Heart left ventricle (tissue), 16 donors: ENCODE measurements at regions of chr17 and their contacts with region 1.

Region 1: DNA sequence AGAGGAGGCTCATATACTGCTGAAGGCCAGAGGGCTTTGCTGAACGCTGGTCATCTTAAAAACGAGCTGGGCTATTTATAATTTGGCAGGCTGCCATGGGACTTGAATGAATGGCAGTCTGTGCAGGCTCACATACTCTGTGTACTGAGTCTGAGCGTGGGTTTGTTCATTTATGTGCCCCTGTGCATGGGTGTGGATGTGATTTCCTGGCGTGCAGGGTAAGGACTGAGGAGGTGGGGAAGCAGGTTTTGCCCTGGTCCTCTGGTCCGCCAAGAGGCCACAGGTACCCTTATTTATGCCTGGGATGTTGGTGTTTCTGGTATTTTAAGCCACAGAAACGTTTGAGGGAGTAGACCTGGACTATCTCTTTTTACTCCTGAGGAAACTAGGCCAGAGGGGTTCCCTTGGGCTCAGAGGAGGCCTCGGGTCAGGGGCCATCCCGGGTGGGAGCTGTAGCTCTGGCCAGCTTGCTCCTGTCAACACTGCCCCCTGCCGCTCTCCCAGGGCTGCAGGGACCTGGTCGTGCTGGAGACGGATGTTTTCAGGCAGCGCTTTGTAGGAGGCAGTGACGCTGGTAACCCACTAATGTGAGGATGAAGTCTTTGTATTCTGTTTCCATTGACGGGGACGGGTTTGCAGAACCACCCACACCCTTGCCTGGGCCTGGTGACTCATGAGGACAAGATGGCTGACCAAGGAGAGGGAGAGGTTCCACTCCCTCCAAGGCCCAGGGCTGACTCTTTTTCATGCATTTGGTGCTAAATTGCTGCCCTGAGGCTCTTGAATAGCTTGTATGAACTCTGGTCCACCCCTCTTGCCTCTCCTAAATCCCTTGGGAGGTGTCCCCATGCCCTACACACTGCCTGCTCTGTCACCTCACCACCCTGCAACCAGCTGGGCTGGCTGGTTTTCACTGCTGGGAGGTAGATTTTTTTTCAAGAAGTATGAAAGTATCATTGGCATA is 184.5 kb downstream of the MSI2 start:
- DNase-seq: peak; percentile 76 to 88 (median 78)
- ATAC-seq: peak; percentile 74 to 86 (median 84)
- H3K4me3 ChIP-seq: peak overlapping the region in 1 of 12 donors; percentile 7
- H3K27ac ChIP-seq: peak overlapping the region; percentile 11 to 87 (median 69)
- H3K4me1 ChIP-seq: peaks cover 4 to 91% (median 57%) of the 10 kb centered on the region in 12 donors
- H3K27me3 ChIP-seq: no peaks in the 10 kb centered on the region
- CTCF ChIP-seq: peak; percentile 16 to 80 (median 56)
- POLR2A ChIP-seq: no peak

Region 2: GRCh38 chr17:57366558-57367351 is 74.0 kb before region 1 on chr17:
- intact Hi-C with region 1: loop called in 1 of 10 experiments (anchors 5 kb)
- DNase-seq: peak in 4 of 5 donors; percentile 17 to 70 (median 54)
- ATAC-seq: peak; percentile 70 to 83 (median 76)
- H3K4me3 ChIP-seq: peak overlapping the region in 2 of 12 donors; percentile 6 to 12
- H3K27ac ChIP-seq: peak overlapping the region; percentile 22 to 84 (median 65)
- H3K4me1 ChIP-seq: peaks cover 0 to 71% (median 50%) of the 10 kb centered on the region in 12 donors
- H3K27me3 ChIP-seq: no peaks in the 10 kb centered on the region
- CTCF ChIP-seq: no peak
- POLR2A ChIP-seq: no peak

Region 3: DNA sequence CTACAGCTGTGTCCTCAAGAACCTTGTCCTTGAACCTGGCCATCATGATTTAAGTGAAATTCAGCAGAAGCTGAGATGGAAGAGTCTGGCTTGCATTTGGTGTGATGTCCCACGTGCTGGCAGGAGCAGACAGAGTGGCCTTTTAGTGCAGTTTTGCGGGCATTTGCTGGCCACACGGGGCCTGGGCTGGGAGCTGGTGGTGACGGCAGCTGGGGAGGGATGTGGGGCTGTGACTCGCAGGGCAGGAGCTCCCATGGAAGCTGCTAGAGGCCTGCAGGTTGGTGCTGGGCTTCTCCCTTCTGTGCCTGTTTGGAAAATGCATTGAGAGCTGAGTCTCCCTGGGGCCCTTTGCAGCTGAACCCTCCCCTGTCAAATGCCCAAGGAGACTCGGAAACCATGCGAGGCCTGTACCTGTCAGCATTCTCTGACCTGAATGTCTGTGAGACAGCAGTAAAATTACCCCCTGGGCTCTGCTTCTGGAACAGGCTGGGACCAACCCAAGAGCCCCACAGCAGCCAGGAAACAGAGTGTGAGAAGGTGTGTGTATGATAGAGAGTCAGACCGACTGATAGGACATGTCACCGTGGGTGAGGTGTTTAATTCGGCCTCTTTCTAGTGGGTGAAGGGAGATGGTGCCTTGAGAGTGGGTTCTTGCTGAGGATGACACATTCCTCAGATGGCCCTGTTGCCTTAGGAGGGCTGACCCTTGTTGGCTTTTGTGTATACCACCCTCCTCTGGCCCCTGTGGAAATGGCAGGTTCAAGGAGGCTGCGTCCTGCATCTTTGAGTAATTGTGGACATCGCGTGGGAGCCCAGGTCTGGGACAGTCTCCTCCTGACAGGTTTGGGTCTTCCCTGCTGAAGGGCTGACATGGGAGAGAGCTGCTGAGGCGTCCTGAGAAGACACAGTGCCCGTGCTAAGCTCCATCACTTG is 39.0 kb before region 1 on chr17:
- intact Hi-C with region 1: loop called in 1 of 10 experiments (anchors 5 kb)
- DNase-seq: no peak
- ATAC-seq: peak in 2 of 4 donors; percentile 18 to 28
- H3K4me3 ChIP-seq: no peak overlapping the region
- H3K27ac ChIP-seq: peak overlapping the region in 1 of 12 donors; percentile 69
- H3K4me1 ChIP-seq: peaks cover 0 to 65% (median 22%) of the 10 kb centered on the region in 12 donors
- H3K27me3 ChIP-seq: no peaks in the 10 kb centered on the region
- CTCF ChIP-seq: peak in 1 of 12 donors; percentile 10
- POLR2A ChIP-seq: no peak